Body of pancreas (tissue), 4 donors: ENCODE measurements at regions of chr7 and their contacts with region 1.

Region 1: GRCh38 chr7:135335628-135336139 is 102.0 kb downstream of the STRA8 start:
- DNase-seq: peak; percentile 79 to 89 (median 86)
- ATAC-seq: peak; percentile 85
- H3K4me3 ChIP-seq: no peak overlapping the region
- H3K27ac ChIP-seq: no peak overlapping the region
- H3K4me1 ChIP-seq: peaks cover 7% of the 10 kb centered on the region
- H3K27me3 ChIP-seq: no peaks in the 10 kb centered on the region
- CTCF ChIP-seq: peak; percentile 22 to 84 (median 73)
- POLR2A ChIP-seq: no peak

Region 2: GRCh38 chr7:135147899-135148721 is 187.6 kb before region 1 on chr7 and contains the start of gene TMEM140:
- intact Hi-C with region 1: no loop called
- DNase-seq: peak; percentile 52 to 78 (median 68)
- ATAC-seq: peak; percentile 91
- H3K4me3 ChIP-seq: peak within 1 kb of the TSS; percentile 4 to 12
- H3K27ac ChIP-seq: peak within 1 kb of the TSS; percentile 89 to 96 (median 91)
- H3K4me1 ChIP-seq: peaks cover 44% of the 10 kb centered on the region
- H3K27me3 ChIP-seq: no peaks in the 10 kb centered on the region
- CTCF ChIP-seq: peak in 4 of 7 experiments; percentile 15 to 29 (median 25)
- POLR2A ChIP-seq: peak; percentile 26 to 74 (median 73)
- total RNA-seq, gene TMEM140: 4.0 to 9.6 TPM

Region 3: DNA sequence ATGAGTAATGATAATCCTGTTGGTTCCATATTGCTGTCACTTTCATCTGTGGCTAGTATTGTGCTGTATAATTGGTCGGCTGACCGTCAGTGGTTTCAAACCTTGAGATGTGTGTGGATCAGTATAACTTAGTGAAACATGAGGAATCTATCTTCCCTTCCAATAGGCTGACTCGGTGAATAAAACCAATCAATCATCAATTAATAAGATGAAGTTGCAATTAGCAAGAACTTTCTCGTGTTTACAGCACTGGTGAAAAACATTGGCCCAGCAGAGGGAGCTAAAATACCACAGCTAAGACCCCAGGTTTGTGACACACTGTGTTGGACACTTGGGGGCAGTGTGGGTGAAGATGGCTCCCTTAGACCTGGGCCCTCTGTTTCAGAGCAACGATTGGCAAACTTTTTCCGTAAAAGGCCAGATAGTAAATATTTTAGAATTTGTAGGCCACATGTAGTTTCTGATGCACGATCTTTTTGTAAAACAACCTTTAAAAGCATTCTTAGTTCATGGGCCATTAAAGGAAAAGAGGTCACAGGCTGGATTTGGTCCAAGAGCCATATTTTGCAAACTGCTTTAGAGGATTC is 54.2 kb before region 1 on chr7:
- intact Hi-C with region 1: loop called (anchors 5 kb)
- DNase-seq: peak; percentile 84 to 90 (median 88)
- ATAC-seq: peak; percentile 98
- H3K4me3 ChIP-seq: no peak overlapping the region
- H3K27ac ChIP-seq: no peak overlapping the region
- H3K4me1 ChIP-seq: no peaks in the 10 kb centered on the region
- H3K27me3 ChIP-seq: no peaks in the 10 kb centered on the region
- CTCF ChIP-seq: peak; percentile 80 to 99 (median 99)
- POLR2A ChIP-seq: no peak